Sciatic nerve (tissue), 2 donors: ENCODE measurements at regions of chrX and their contacts with region 1.

Region 1: DNA sequence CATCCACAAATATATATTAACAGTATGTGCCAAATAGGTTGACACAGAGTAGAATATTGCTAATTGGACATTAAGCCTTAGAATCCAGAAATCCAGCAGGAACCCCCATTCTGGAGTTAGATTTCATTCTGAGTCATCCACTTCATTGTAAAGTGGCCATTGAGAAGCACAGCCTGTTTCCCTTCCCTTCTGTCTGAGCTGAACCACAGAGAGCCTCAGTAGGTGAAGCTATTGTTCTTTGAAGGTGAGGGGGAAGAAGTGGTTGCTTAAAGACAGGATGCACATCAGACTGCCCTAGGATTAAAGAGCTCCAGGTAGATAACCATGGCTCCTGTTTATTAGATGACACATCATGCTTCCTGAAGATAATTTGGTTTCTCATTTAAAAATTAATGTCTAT is 30.6 kb upstream of the MCF2 start:
- DNase-seq: no peak
- ATAC-seq: no peak

Region 2: DNA sequence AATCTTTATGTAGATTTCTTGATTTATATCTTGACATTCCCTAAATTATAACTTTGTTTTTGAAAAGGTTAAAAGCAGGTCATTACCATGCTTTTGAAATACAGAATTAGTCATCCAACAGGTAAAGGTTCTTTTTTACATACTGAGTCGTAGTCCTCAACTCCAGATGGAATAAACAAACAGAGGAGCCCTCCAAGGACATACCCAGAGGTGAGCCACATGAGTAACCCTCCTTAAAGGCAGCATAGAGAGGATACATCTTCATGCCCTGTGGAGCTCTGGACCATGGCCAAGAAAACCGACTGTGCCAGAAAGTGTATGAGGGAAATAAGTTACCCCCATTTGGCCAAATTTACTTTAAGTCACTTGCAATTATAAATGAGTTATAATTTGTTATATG is 64.6 kb after region 1 on chrX:
- intact Hi-C with region 1: loop called (anchors 2 kb)
- DNase-seq: no peak
- ATAC-seq: no peak

Region 3: DNA sequence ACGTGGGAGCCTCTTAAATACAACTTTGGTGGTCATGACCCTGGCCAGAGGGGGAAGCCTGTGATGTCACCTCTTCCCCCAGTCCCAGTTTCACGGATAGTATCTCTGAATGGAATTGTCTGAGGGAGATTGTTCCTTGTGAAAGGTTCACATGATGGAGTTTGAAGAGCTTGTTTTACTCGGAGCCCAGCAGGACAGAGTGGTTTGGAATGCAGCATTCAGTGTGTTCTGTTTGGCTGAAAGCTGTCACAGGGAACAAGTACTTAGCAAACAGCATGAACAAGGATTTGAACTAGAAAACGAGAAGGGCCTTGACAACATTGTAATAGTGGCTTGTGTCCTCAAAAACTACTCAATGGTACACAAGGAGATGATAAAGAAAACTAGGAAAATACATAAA is 360.6 kb after region 1 on chrX:
- intact Hi-C with region 1: no loop called
- DNase-seq: no peak
- ATAC-seq: no peak